GM12878 (cell line): ENCODE measurements at regions of chr22 and their contacts with region 1.

Region 1: GRCh38 chr22:37817705-37818408 is 5.3 kb upstream of the GALR3 start:
- DNase-seq: no peak
- ATAC-seq: peak; percentile 96
- H3K4me3 ChIP-seq: peak overlapping the region; percentile 37; the same call in 1 of the 2 replicates
- H3K27ac ChIP-seq: no peak overlapping the region
- H3K4me1 ChIP-seq: peaks cover 10% of the 10 kb centered on the region
- H3K27me3 ChIP-seq: peaks cover 0 to 2% of the 10 kb centered on the region in 2 experiments; a peak in 2 of 4 replicates
- CTCF ChIP-seq: peak; percentile 90 to 97 (median 92)
- EP300 ChIP-seq: no peak
- POLR2A ChIP-seq: peak; percentile 38; the same call in 1 of the 2 replicates
- RAD21 ChIP-seq: peak; percentile 82

Region 2: DNA sequence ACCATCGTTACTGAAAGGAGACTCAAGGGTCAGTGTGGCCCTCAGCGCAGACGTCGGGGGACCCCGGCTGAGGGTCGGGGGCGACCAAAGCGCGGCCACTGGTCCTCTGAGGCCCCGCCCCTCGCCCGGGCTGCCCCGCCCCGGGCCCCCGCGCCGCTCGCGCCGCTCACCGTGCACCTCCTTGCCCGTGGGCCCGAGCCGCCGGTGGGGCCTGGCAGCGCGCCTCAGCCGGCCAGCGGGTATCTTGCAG is 25.8 kb after region 1 on chr22:
- CTCF ChIA-PET with region 1: interaction called, 11 read pairs
- POLR2A ChIA-PET with region 1: no interaction called
- RAD21 ChIA-PET with region 1: interaction called, 3 read pairs
- SMC1A ChIA-PET with region 1: no interaction called
- in situ Hi-C with region 1: no loop called
- intact Hi-C with region 1: no loop called
- DNase-seq: no peak
- ATAC-seq: peak; percentile 67
- H3K4me3 ChIP-seq: peak overlapping the region; percentile 86
- H3K27ac ChIP-seq: peak overlapping the region; percentile 51
- H3K4me1 ChIP-seq: peaks cover 8% of the 10 kb centered on the region; the same call in 1 of the 2 replicates
- H3K27me3 ChIP-seq: no peaks in the 10 kb centered on the region
- CTCF ChIP-seq: no peak
- EP300 ChIP-seq: no peak
- POLR2A ChIP-seq: no peak
- RAD21 ChIP-seq: no peak

Region 3: DNA sequence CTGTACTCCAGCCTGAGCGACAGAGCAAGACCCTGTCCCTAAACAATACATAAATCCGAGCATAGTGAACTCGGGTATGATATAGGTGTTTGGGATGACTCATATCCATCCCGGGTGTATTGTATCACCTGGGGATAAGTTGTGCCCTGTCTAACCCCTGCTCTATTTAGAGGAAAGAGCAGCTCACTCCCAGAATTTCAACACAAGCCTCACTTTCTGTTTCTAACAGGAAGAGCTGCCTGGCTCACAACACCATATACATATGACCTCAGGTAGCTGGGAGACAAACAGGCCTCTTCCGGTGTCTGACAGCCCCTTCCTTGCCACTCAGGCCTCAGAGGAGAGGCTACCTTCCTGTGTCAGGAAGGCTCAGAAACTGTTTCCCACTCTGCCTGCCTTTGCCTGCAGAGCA is 78.3 kb after region 1 on chr22:
- CTCF ChIA-PET with region 1: interaction called, 11 read pairs
- POLR2A ChIA-PET with region 1: no interaction called
- RAD21 ChIA-PET with region 1: no interaction called
- SMC1A ChIA-PET with region 1: interaction called, 3 read pairs
- in situ Hi-C with region 1: no loop called
- intact Hi-C with region 1: no loop called
- DNase-seq: peak; percentile 60
- ATAC-seq: peak; percentile 98
- H3K4me3 ChIP-seq: no peak overlapping the region
- H3K27ac ChIP-seq: peak overlapping the region; percentile 89
- H3K4me1 ChIP-seq: peaks cover 11% of the 10 kb centered on the region
- H3K27me3 ChIP-seq: no peaks in the 10 kb centered on the region
- CTCF ChIP-seq: no peak
- EP300 ChIP-seq: no peak
- POLR2A ChIP-seq: peak; percentile 70
- RAD21 ChIP-seq: no peak

Region 4: DNA sequence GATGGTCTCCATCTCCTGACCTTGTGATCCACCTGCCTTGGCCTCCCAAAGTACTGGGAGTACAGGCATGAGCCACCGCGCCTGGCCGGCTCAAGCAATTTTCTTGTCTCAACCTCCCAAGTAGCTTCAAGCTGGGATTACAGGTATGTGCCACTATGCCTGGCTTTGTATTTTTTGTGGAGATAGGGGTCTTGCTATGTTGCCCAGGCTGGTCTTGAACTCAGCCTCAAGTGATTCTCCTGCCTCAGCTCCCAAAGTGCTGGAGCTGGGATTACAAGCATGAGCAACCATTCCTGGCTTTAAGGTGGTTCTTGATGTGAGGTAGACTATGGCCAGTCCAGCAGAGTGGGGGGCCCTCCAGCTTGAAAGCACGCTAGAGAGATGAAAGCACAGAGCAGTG is 143.2 kb after region 1 on chr22:
- CTCF ChIA-PET with region 1: interaction called, 59 read pairs
- POLR2A ChIA-PET with region 1: no interaction called
- RAD21 ChIA-PET with region 1: interaction called, 3 read pairs
- SMC1A ChIA-PET with region 1: interaction called, 4 read pairs
- in situ Hi-C with region 1: loop called (anchors 5 kb)
- intact Hi-C with region 1: loop called (anchors 1 kb)
- DNase-seq: no peak
- ATAC-seq: no peak
- H3K4me3 ChIP-seq: no peak overlapping the region
- H3K27ac ChIP-seq: no peak overlapping the region
- H3K4me1 ChIP-seq: no peaks in the 10 kb centered on the region
- H3K27me3 ChIP-seq: no peaks in the 10 kb centered on the region
- CTCF ChIP-seq: no peak
- EP300 ChIP-seq: no peak
- POLR2A ChIP-seq: no peak
- RAD21 ChIP-seq: no peak